ENCODE measurements at regions of chr15 and their contacts with region 1.

Region 1: GRCh38 chr15:44593042-44593736 is 56.2 kb downstream of the EIF3J start:
- DNase-seq: no peak
- ATAC-seq: no peak

Region 2: GRCh38 chr15:44654858-44655257 is 61.7 kb after region 1 on chr15:
- intact Hi-C with region 1: loop called (anchors 10 kb)
- DNase-seq: no peak
- ATAC-seq: no peak